ENCODE measurements at regions of chr15 and their contacts with region 1.

Region 1: DNA sequence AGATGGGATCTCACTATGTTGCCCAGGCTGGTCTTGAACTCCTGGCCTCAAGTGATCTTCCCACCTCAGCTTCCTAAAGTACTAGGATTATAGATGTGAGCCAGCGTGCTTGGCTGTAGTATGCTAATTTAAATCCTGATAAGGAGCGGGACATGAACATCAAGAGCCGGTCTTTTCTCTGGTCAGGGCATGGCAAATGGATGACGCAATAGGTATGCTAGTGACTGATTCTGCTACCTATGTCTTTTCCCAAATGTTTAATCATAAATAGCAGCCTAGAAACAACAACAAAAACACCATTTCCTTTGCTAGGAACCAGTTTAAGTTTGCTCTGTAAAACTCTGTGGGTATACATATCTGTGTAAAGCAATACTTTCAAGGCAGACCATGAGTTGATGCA is 64.7 kb downstream of the STARD9 start:
- DNase-seq: no peak
- ATAC-seq: no peak
- H3K4me3 ChIP-seq: no peak overlapping the region
- H3K27ac ChIP-seq: no peak overlapping the region
- H3K4me1 ChIP-seq: no peaks in the 10 kb centered on the region
- H3K27me3 ChIP-seq: no peaks in the 10 kb centered on the region
- CTCF ChIP-seq: no peak

Region 2: GRCh38 chr15:42313463-42313862 is 326.6 kb before region 1 on chr15:
- intact Hi-C with region 1: no loop called
- DNase-seq: peak in 1 of 4 donors; percentile 5
- ATAC-seq: no peak
- H3K4me3 ChIP-seq: no peak overlapping the region
- H3K27ac ChIP-seq: no peak overlapping the region
- H3K4me1 ChIP-seq: no peaks in the 10 kb centered on the region
- H3K27me3 ChIP-seq: no peaks in the 10 kb centered on the region
- CTCF ChIP-seq: no peak

Region 3: GRCh38 chr15:42549741-42550392 is 90.2 kb before region 1 on chr15:
- intact Hi-C with region 1: loop called in 1 of 2 experiments (anchors 10 kb)
- DNase-seq: no peak
- ATAC-seq: no peak
- H3K4me3 ChIP-seq: peak overlapping the region; percentile 84 to 99
- H3K27ac ChIP-seq: peak overlapping the region in 1 of 2 donors; percentile 96
- H3K4me1 ChIP-seq: peaks cover 19 to 63% of the 10 kb centered on the region in 2 donors
- H3K27me3 ChIP-seq: no peaks in the 10 kb centered on the region
- CTCF ChIP-seq: no peak

Region 4: DNA sequence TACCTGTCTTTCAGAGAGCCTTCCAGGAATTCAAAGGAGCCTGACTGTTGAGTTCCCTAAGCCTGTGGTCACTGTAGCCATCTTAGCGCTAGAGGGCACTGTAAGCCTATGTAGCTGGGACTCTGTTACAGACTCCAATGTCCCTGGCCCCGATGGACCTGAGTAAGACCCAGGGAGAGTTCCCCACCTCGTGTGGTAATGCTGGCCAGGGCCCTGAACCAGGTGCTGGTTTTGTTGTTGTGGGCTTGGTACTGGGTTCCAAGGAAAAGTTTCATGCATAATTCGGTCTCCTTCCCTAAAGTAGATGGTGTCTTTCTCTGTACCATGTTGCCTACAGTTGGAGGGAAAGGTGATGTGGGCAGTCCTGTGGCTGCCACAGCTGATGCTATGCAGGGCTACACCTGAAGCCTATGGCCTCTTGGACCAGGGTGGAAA is 64.4 kb after region 1 on chr15:
- intact Hi-C with region 1: no loop called
- DNase-seq: peak in 3 of 4 donors; percentile 42 to 71 (median 47)
- ATAC-seq: peak; percentile 99
- H3K4me3 ChIP-seq: no peak overlapping the region
- H3K27ac ChIP-seq: no peak overlapping the region
- H3K4me1 ChIP-seq: peaks cover 0 to 13% of the 10 kb centered on the region in 2 donors
- H3K27me3 ChIP-seq: no peaks in the 10 kb centered on the region
- CTCF ChIP-seq: peak; percentile 66 to 81

Region 5: DNA sequence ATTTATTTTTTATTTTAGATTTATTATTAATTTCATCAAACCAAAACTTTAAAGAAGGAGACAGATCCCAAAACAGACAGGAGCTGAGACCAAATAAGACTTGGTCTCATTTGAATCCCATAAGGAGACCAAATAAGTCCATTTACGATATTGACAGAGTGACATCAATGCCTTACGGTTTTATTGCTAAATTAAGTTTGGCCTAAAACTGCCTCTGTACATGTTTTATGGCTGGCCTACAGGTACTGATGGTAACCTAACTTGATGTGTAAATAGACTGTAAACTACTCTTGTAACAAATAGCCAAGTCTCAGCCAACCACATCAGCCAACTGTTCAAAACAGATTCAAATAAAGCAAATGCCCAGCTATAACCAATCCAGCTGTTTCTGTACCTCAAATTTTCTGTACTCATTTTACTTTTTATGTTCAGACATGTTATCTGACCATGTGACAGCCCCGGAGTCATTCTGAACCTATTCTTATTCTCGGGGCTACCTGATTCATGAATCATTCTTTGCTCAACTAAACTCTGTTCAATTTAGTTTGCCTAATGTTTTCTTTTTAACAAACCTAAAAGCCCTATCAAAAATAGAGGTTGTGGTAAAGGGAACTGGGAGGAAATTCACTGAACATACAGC is 186.3 kb after region 1 on chr15:
- intact Hi-C with region 1: no loop called
- DNase-seq: no peak
- ATAC-seq: no peak
- H3K4me3 ChIP-seq: no peak overlapping the region
- H3K27ac ChIP-seq: no peak overlapping the region
- H3K4me1 ChIP-seq: no peaks in the 10 kb centered on the region
- H3K27me3 ChIP-seq: no peaks in the 10 kb centered on the region
- CTCF ChIP-seq: no peak

Region 6: GRCh38 chr15:42863572-42864239 is 223.6 kb after region 1 on chr15:
- intact Hi-C with region 1: no loop called
- DNase-seq: no peak
- ATAC-seq: no peak
- H3K4me3 ChIP-seq: no peak overlapping the region
- H3K27ac ChIP-seq: no peak overlapping the region
- H3K4me1 ChIP-seq: no peaks in the 10 kb centered on the region
- H3K27me3 ChIP-seq: no peaks in the 10 kb centered on the region
- CTCF ChIP-seq: no peak